ENCODE measurements at regions of chr1 and their contacts with region 1.

Region 1: DNA sequence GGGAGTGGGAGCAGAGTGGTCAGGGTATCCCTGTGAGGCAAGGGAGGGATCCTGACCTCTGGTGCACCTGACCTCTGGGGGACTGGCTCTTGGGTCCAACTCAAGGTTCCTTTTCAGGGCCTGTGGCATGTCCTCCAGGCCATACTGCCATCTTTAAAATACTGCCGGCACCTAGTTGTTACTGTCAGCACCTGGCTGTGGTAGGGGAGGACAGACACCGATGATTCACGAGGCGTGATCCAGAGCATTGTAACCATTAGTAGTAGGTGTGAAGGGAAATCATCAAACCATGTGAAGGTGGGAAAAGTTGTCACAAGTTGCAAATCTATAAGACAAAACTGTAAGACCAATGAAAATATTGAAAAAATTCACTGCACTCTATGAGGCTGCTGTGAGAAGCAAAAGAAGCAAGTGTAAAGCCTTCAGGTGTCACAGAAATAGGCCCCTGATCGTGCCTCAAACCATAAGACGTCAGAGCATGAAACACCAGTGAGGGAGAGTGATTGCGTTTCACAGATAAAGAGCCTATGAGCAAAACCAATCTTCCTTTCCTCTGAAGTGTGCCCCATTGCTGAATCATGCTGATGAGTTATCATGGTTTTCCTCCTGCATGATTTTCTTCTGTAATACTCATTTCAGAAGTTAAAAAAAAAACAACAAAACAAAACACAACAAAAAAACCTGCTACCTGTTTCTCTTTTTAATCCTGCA is 55.3 kb downstream of the CDC7 start:
- DNase-seq: peak; percentile 84
- H3K4me3 Mint-ChIP-seq: peak overlapping the region; percentile 26
- H3K27ac Mint-ChIP-seq: peak overlapping the region; percentile 90
- H3K4me1 Mint-ChIP-seq: peaks cover 68% of the 10 kb centered on the region
- H3K27me3 Mint-ChIP-seq: no peaks in the 10 kb centered on the region

Region 2: GRCh38 chr1:91381844-91382243 is 174.1 kb before region 1 on chr1:
- CTCF ChIA-PET with region 1: no interaction called
- intact Hi-C with region 1: no loop called
- DNase-seq: no peak
- H3K4me3 Mint-ChIP-seq: no peak overlapping the region
- H3K27ac Mint-ChIP-seq: no peak overlapping the region
- H3K4me1 Mint-ChIP-seq: no peaks in the 10 kb centered on the region
- H3K27me3 Mint-ChIP-seq: peaks cover 6% of the 10 kb centered on the region

Region 3: DNA sequence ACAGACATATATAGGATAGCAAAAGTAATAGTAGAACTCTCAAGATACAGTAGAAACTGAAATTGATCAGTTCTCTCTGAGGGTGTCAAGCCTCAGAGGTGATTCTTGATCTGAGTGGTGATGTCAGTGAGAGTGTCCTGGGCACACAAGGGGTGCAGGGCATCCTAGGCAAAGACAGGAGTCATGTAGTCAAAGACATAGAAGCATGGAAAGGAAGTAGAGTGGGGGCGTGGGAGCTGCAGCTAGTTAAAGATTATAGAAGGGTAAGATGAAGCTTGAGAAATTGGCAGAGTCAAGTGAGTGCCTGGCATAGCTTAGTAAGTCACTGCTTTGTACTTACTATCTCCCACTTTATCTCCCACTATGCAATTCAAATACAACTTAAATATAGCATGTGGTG is 32.5 kb before region 1 on chr1:
- CTCF ChIA-PET with region 1: no interaction called
- intact Hi-C with region 1: loop called (anchors 1 kb)
- DNase-seq: peak; percentile 55
- H3K4me3 Mint-ChIP-seq: no peak overlapping the region
- H3K27ac Mint-ChIP-seq: no peak overlapping the region
- H3K4me1 Mint-ChIP-seq: peaks cover 18% of the 10 kb centered on the region
- H3K27me3 Mint-ChIP-seq: no peaks in the 10 kb centered on the region

Region 4: DNA sequence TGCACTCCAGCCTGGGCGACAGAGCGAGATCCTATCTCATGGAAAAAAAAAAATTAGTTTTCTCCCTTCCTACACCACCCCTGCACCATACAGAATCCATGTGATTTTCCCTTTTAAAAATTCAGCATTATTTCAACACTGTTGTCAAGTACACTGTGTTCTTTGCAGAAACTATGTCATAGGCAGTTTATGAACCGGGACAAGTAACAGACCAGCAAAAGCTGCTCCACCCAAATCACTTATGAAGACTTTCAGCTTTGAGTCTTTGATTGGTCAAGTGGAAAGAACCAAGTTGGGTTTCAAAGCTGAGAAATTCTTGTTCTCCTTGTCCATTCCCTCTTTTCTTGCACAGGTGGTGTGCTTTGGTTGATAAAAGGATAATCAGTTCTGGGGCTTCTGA is 117.6 kb after region 1 on chr1:
- CTCF ChIA-PET with region 1: no interaction called
- intact Hi-C with region 1: loop called (anchors 1 kb)
- DNase-seq: no peak
- H3K4me3 Mint-ChIP-seq: no peak overlapping the region
- H3K27ac Mint-ChIP-seq: peak overlapping the region; percentile 73
- H3K4me1 Mint-ChIP-seq: peaks cover 28% of the 10 kb centered on the region
- H3K27me3 Mint-ChIP-seq: no peaks in the 10 kb centered on the region

Region 5: DNA sequence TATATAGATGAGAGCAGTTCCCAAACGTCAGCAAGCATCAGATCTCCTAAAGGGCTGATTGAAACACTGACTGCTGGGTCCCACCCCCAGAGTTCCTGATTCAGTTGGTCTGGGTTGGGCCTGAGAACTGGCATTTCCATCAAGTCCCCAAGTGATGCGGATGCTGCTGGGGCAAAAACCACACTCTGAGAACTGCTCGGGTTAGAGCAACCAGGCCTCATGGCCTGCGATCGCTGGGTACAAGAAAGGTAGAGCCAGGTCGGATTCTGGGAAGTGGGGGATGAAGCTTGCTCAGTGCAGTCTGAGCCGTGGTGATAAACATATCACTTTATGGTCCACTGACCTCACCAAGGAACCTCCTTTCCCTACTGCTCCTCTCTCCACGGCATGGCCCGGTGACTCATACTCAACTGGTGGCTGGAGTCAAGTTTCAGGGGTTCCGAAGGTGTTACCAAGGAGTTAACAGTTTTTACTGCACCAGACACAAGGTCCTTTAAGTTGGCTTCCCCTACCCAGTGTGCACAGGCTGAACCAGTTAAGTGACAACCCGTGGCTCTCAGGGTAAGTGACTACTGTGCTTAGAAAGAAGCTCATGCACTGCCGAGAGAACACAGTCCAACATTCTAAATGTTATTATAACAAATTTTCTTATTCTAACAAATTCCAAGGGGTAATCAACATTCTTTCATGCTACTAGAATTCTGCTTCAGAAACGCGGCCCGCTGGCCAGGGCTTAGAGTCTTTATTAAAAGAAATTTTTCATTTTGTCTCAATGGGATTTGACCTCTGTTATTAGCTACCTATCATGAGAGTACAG is 176.5 kb after region 1 on chr1:
- CTCF ChIA-PET with region 1: interaction called, 3 read pairs
- intact Hi-C with region 1: loop called (anchors 1 kb)
- DNase-seq: peak; percentile 24
- H3K4me3 Mint-ChIP-seq: no peak overlapping the region
- H3K27ac Mint-ChIP-seq: peak overlapping the region; percentile 64
- H3K4me1 Mint-ChIP-seq: peaks cover 30% of the 10 kb centered on the region
- H3K27me3 Mint-ChIP-seq: no peaks in the 10 kb centered on the region

Region 6: GRCh38 chr1:92310185-92310597 is 754.2 kb after region 1 on chr1:
- CTCF ChIA-PET with region 1: no interaction called
- intact Hi-C with region 1: loop called (anchors 1 kb)
- DNase-seq: no peak
- H3K4me3 Mint-ChIP-seq: no peak overlapping the region
- H3K27ac Mint-ChIP-seq: no peak overlapping the region
- H3K4me1 Mint-ChIP-seq: peaks cover 37% of the 10 kb centered on the region
- H3K27me3 Mint-ChIP-seq: no peaks in the 10 kb centered on the region

Region 7: DNA sequence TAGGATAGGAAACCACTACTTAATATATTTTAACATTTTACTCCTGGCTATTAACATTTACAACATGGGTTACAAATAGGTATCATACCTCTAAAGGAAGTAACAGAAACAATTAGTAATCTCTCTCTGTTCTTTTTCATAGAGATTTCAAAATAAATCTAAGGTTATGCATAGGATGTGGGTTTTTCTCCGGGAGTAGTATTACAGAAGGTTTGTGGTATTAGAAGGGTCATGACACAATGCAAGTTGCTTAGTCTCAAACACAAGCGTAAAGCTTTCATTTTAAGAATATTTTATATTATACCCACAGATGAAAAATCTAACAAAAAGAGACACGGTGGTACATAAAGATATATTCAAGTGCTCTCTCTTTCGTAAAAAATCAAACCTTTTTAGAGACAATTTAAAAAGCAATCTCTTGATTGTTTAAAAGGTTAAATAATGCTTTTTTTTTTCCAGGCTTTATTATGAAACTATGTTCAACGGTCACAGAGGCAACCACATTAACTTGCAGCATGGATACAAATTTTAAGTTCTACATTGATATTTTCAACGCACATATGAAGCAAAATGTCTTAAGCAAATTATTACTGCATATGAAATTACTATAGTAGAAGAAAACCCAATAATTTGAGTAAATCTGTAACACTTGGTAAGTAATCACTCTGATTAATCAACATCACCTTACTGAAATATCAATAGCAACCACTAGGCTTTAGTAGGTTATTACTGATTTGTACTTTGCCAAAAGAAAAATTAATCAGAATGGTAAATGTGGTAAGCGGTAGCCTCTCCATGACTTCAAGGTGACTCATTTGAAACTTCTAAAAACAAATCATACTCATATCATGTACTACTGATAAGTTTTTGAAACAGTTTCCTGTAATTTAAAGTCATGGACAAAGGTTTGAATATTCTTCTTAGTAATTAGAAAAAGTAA is 1028.1 kb after region 1 on chr1:
- CTCF ChIA-PET with region 1: no interaction called
- intact Hi-C with region 1: loop called (anchors 5 kb)
- DNase-seq: no peak
- H3K4me3 Mint-ChIP-seq: peak overlapping the region; percentile 45
- H3K27ac Mint-ChIP-seq: peak overlapping the region; percentile 88
- H3K4me1 Mint-ChIP-seq: peaks cover 72% of the 10 kb centered on the region
- H3K27me3 Mint-ChIP-seq: no peaks in the 10 kb centered on the region

Measured in activated naive CD4-positive, alpha-beta T cell treated with anti-CD3 and anti-CD28 coated beads for 36 hours (primary cell).